A549 (cell line): ENCODE measurements at regions of chr1 and their contacts with region 1.

Region 1: GRCh38 chr1:211476200-211476849 is 15.6 kb downstream of the RD3 start:
- DNase-seq: peak; percentile 67 to 72
- ATAC-seq: peak; percentile 83 to 94; a peak in 5 of 6 replicates
- H3K4me3 ChIP-seq: no peak overlapping the region
- H3K27ac ChIP-seq: no peak overlapping the region
- H3K4me1 ChIP-seq: 0 out of 3 replicates have a peak, but pooled peaks cover 7% of the 10 kb centered on the region
- CTCF ChIP-seq: peak; percentile 90
- EP300 ChIP-seq: no peak
- POLR2A ChIP-seq: no peak
- RAD21 ChIP-seq: peak; percentile 53 to 61

Region 2: DNA sequence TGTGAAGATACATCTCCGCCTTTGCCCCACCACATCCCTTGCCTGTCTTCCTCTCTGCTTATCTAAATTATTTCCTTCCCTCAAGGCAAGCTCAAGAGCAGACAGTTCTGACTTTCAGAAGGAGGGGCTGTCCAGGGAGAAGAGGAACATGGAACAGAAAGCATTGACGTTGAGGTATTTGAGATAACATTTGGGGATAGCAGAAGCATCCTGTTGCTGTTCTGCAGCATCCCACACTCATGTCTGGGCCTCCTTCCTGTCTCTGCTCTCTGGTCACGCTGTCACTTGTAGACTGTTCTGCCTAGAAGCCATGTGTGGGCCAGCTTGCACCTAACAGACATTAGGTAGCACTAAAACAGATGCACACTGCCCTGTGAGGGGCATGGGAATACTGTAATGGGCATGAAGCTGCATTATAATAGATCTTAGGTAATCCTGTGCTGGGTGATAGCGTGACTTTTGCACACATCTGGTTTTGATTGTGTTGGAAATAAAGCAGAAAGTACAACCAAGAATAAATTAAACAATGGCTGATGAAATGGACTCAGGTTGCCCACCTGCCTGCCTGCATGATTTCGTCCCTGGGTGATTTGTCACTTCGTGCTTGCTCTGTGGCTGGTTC is 16.3 kb after region 1 on chr1:
- CTCF ChIA-PET with region 1: interaction called, 17 read pairs
- POLR2A ChIA-PET with region 1: no interaction called
- DNase-seq: no peak
- ATAC-seq: no peak
- H3K4me3 ChIP-seq: no peak overlapping the region
- H3K27ac ChIP-seq: no peak overlapping the region
- H3K4me1 ChIP-seq: no peaks in the 10 kb centered on the region
- CTCF ChIP-seq: no peak
- EP300 ChIP-seq: no peak
- POLR2A ChIP-seq: no peak
- RAD21 ChIP-seq: no peak